ENCODE measurements at regions of chr1 and their contacts with region 1.

Region 1: DNA sequence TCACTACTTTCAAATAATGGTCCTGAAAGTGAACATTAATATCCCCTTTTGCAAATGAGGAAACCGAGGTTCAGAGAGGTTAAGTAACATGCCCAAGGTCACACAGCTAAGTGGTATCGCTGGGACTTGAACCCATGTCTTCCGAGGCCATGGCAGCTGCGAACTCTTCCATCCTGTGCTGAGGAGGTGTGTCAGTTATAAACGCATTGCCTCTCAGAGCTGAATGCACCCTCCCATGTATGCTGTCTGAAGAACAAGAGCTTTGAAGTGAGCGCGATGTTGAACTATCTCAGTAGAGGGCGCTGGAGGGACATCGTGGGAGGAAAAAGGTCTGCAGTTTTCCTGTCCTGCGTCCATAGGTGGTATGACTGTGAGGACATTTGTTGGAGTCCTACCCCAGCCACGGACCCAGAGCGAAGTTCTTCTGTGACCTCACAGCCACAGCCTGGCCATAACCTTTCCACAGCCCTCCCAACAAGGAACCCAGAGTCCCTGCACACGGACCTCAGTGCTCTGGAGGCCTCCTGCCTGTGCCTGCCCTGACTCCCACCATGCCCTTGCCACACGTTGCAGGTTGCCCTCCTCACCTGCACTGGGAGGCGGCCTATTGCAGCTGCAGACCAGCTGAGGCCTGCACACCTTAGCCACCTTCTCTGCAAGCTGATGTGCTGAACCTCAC is 7.5 kb downstream of the MYOC start:
- DNase-seq: peak; percentile 70 to 75
- H3K4me3 ChIP-seq: no peak overlapping the region
- H3K27ac ChIP-seq: no peak overlapping the region
- H3K4me1 ChIP-seq: no peaks in the 10 kb centered on the region
- H3K27me3 ChIP-seq: no peaks in the 10 kb centered on the region
- CTCF ChIP-seq: peak; percentile 86

Region 2: GRCh38 chr1:171715813-171716251 is 70.9 kb after region 1 on chr1:
- CTCF ChIA-PET with region 1: interaction called, 17 read pairs
- POLR2A ChIA-PET with region 1: interaction called, 5 read pairs
- intact Hi-C with region 1: loop called (anchors 1 kb)
- DNase-seq: no peak
- H3K4me3 ChIP-seq: no peak overlapping the region
- H3K27ac ChIP-seq: no peak overlapping the region
- H3K4me1 ChIP-seq: no peaks in the 10 kb centered on the region
- H3K27me3 ChIP-seq: no peaks in the 10 kb centered on the region
- CTCF ChIP-seq: peak; percentile 69

Region 3: GRCh38 chr1:171741872-171742576 is 97.1 kb after region 1 on chr1 and contains the start of gene VAMP4:
- CTCF ChIA-PET with region 1: interaction called, 4 read pairs
- POLR2A ChIA-PET with region 1: no interaction called
- intact Hi-C with region 1: loop called (anchors 1 kb)
- DNase-seq: peak; percentile 70 to 78
- H3K4me3 ChIP-seq: peak within 1 kb of the TSS; percentile 88
- H3K27ac ChIP-seq: peak within 1 kb of the TSS; percentile 88
- H3K4me1 ChIP-seq: peaks cover 29% of the 10 kb centered on the region
- H3K27me3 ChIP-seq: no peaks in the 10 kb centered on the region
- CTCF ChIP-seq: no peak
- total RNA-seq, gene VAMP4: 5.2 and 9.8 TPM in 2 replicates

Region 4: DNA sequence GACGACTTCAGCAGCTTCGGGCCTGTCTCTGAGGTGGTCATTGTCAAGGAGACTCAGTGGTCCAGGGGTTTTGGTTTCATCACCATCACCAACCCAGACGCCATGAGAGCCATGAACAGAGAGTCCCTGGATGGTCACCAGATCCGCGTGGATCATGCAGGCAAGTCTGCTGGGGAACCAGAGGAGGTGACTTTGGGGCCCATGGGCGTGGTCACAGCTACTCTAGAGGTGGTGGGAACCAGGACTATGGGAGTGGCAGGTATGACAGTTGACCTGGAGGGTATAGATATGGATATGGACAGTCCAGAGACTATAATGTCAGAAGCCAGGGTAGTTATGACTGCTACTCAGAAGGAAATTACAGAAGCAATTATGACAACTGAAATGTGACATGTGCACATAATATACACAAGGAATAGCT is 117.2 kb after region 1 on chr1:
- CTCF ChIA-PET with region 1: no interaction called
- POLR2A ChIA-PET with region 1: no interaction called
- intact Hi-C with region 1: no loop called
- DNase-seq: no peak
- H3K4me3 ChIP-seq: no peak overlapping the region
- H3K27ac ChIP-seq: no peak overlapping the region
- H3K4me1 ChIP-seq: no peaks in the 10 kb centered on the region
- H3K27me3 ChIP-seq: no peaks in the 10 kb centered on the region
- CTCF ChIP-seq: no peak

Region 5: GRCh38 chr1:171781176-171781875 is 136.4 kb after region 1 on chr1 and contains the start of gene METTL13:
- CTCF ChIA-PET with region 1: interaction called, 5 read pairs
- POLR2A ChIA-PET with region 1: no interaction called
- intact Hi-C with region 1: loop called (anchors 5 kb)
- DNase-seq: peak; percentile 98 to 99
- H3K4me3 ChIP-seq: peak within 1 kb of the TSS; percentile 79
- H3K27ac ChIP-seq: peak within 1 kb of the TSS; percentile 72
- H3K4me1 ChIP-seq: peaks cover 22% of the 10 kb centered on the region
- H3K27me3 ChIP-seq: no peaks in the 10 kb centered on the region
- CTCF ChIP-seq: no peak
- total RNA-seq, gene METTL13: 32.2 and 35.9 TPM in 2 replicates

Region 6: DNA sequence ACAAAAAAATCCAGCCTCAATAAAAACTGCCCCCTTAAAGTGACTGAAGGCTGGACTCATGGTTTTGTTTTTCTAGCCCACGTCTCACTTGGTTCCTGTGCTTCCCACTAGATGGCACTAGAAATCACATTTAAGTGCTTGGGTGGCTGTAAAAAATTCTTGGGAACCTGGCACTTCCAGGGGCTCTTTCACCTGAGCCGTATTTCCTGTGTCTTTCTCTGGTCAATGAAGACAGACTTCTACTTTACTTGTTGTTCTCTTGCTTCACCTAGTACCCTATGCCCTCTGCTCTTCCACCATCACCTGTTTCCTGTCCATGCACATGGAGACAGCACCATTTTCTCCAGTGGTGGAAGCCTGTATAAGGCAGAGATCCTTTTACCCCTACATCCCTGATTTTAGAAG is 156.5 kb after region 1 on chr1:
- CTCF ChIA-PET with region 1: interaction called, 11 read pairs
- POLR2A ChIA-PET with region 1: no interaction called
- intact Hi-C with region 1: loop called (anchors 5 kb)
- DNase-seq: peak in 1 of 2 experiments; percentile 43
- H3K4me3 ChIP-seq: no peak overlapping the region
- H3K27ac ChIP-seq: no peak overlapping the region
- H3K4me1 ChIP-seq: no peaks in the 10 kb centered on the region
- H3K27me3 ChIP-seq: no peaks in the 10 kb centered on the region
- CTCF ChIP-seq: peak; percentile 82

Region 7: DNA sequence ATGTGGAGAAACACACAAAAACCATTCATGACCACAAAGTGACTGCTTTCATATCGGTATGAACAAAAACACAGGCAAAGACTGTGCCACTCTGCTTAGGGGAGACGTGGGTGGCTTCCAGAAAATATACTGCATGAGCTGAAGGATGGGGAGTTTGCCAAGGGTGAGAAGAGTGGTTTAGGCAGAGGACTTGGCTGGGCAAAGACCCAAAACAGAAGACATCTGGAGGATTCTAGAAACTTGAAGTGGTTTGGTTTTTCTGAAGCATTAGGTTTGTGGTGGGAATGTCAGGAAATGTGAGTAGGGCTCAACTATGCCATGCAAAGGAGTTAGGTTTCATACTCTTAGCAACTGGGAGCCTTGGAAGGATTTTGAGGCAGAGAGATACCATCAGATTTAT is 169.7 kb after region 1 on chr1:
- CTCF ChIA-PET with region 1: no interaction called
- POLR2A ChIA-PET with region 1: no interaction called
- intact Hi-C with region 1: no loop called
- DNase-seq: no peak
- H3K4me3 ChIP-seq: no peak overlapping the region
- H3K27ac ChIP-seq: no peak overlapping the region
- H3K4me1 ChIP-seq: peaks cover 16% of the 10 kb centered on the region
- H3K27me3 ChIP-seq: no peaks in the 10 kb centered on the region
- CTCF ChIP-seq: no peak

Region 8: DNA sequence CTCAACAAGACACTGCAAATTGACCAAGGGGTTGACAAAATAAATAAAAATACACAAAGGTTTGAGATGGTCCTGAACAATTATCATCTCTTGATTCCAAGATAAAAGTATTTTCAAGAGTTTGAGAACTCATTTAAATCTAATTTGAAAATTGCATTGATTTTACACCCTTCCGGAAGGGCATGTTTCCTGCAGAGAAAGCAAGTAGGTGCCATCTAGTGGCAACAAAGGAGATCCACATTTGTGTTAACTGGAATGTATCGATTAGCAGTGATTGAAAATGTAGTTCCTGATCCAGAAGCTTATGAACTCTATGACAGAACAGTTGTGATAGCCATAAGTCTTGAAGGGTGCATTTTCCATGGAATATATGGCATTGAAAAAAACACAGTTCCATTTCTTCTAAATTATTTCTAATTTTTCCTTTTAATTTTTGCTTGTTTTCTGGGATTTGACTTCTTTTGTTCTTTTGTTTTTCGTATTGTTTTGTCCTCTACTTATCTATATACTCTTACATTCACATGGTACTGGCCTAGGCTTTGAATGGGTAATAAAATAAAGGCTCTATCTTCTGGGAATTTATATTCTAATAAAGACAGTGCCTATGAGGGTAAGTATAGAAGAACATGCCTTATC is 340.0 kb after region 1 on chr1:
- CTCF ChIA-PET with region 1: interaction called, 4 read pairs
- POLR2A ChIA-PET with region 1: interaction called, 10 read pairs
- intact Hi-C with region 1: loop called (anchors 1 kb)
- DNase-seq: peak in 1 of 2 experiments; percentile 38
- H3K4me3 ChIP-seq: no peak overlapping the region
- H3K27ac ChIP-seq: no peak overlapping the region
- H3K4me1 ChIP-seq: no peaks in the 10 kb centered on the region
- H3K27me3 ChIP-seq: no peaks in the 10 kb centered on the region
- CTCF ChIP-seq: peak; percentile 82

Region 9: DNA sequence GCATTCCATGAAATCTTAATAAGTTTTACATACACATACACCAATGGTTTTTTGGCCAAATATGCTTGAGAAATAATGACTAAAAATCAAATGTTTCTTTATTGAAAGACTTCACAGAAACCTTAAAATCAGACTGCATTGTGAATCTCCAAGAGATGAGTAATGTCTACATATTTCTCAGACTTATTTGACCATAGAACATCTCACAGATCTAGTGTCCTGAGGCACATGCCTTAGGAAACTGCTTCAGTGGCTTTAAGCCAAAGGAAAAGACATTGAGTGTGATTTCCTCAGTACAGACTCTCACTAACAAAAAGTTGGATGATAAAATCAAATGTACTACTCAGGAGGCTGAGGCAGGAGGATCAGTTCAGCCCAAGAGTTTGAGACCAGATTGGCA is 769.4 kb after region 1 on chr1:
- CTCF ChIA-PET with region 1: no interaction called
- POLR2A ChIA-PET with region 1: no interaction called
- intact Hi-C with region 1: loop called (anchors 10 kb)
- DNase-seq: peak in 1 of 2 experiments; percentile 35
- H3K4me3 ChIP-seq: no peak overlapping the region
- H3K27ac ChIP-seq: no peak overlapping the region
- H3K4me1 ChIP-seq: peaks cover 37% of the 10 kb centered on the region
- H3K27me3 ChIP-seq: no peaks in the 10 kb centered on the region
- CTCF ChIP-seq: no peak

Measured in PC-9 (cell line).